Left ventricle myocardium inferior (tissue), 1 donor: ENCODE measurements at regions of chr7 and their contacts with region 1.

Region 1: DNA sequence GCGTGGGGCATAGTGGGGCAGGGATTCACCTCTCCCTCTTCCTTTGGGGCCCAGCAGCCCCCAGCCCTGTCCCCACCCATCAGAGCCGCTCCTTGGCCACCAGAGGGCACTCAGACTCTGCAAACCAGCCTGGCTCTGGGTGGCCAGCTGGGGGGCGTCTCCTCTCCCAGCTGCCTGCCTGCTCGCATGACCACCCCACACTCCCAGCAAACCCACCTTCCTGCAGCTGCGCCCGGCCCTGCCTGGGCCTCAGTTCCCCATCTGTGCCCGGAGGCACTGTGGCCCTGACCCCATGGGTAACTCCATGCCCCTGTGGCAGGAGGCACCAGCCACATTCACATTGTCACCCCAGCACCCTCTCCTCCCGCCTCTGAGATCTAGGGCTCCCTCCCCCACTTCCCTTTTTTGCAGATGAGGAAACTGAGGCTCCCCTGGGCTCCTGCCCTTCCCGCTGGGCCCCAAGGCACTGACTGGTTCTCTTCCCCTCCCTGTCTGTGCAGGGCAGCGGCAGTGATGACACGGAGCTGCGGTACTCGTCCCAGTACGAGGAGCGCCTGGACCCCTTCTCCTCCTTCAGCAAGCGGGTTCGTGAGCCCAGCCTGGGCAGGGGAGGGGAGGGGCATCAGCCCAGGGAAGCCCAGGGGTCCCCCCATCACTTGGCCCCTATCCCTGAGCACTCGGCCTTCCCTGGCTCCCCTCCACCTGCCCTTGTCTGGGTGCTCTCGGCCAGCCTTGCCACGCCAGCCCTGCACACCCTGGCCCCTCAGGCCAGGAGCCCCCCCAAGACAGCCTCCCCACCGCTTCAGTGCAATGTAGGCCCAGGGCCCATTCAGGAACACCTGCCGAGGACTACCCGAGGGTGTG is 6.9 kb upstream of the SH2B2 start:
- DNase-seq: peak; percentile 29
- H3K4me3 ChIP-seq: no peak overlapping the region
- H3K27ac ChIP-seq: no peak overlapping the region
- H3K4me1 ChIP-seq: peaks cover 2% of the 10 kb centered on the region
- H3K27me3 ChIP-seq: no peaks in the 10 kb centered on the region
- CTCF ChIP-seq: peak; percentile 83

Region 2: GRCh38 chr7:101688183-101688831 is 591.5 kb before region 1 on chr7:
- intact Hi-C with region 1: loop called (anchors 10 kb)
- DNase-seq: peak; percentile 81
- H3K4me3 ChIP-seq: peak overlapping the region; percentile 52
- H3K27ac ChIP-seq: no peak overlapping the region
- H3K4me1 ChIP-seq: peaks cover 20% of the 10 kb centered on the region
- H3K27me3 ChIP-seq: no peaks in the 10 kb centered on the region
- CTCF ChIP-seq: peak; percentile 96

Region 3: GRCh38 chr7:102169651-102170392 is 109.9 kb before region 1 on chr7:
- intact Hi-C with region 1: no loop called
- DNase-seq: no peak
- H3K4me3 ChIP-seq: peak overlapping the region; percentile 27
- H3K27ac ChIP-seq: peak overlapping the region; percentile 58
- H3K4me1 ChIP-seq: peaks cover 18% of the 10 kb centered on the region
- H3K27me3 ChIP-seq: no peaks in the 10 kb centered on the region
- CTCF ChIP-seq: no peak

Region 4: DNA sequence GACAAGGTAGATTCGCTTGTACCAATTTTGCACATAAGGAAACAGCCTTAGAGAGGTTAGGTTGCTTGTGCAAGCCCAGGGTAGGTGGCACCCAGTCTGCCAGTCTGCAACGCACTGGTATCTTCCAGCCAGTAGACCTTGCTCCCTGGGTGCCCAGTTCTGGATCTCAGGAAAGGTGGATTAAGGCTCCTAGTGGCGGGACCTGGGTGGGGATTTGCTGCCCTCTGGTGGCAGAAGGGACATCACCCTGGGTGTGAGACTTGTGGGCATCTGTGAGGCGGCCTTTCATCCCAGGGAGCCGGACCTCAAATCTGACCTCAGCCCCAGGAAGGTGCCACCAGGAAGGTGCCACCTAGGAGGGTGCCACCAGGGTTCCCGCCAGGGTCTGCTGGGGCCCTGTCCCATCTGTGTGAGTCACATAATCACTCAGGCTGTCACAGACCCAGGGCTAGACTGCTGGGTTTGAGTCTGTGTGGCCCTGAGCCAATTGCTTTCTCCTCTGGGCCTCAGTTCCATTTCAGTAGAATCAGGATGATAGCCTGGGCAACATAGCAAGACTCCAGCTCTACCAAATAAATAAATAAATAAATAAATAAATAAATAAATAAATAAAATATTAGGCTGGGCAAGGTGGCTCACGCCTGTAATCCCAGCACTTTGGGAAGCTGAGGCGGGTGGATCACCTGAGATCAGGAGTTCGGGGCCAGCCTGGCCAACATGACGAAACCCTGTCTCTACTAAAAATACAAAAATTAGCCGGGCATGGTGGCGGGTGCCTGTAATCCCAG is 111.1 kb after region 1 on chr7:
- intact Hi-C with region 1: loop called (anchors 5 kb)
- DNase-seq: peak; percentile 77
- H3K4me3 ChIP-seq: no peak overlapping the region
- H3K27ac ChIP-seq: no peak overlapping the region
- H3K4me1 ChIP-seq: peaks cover 11% of the 10 kb centered on the region
- H3K27me3 ChIP-seq: no peaks in the 10 kb centered on the region
- CTCF ChIP-seq: peak; percentile 95

Region 5: GRCh38 chr7:102412548-102412947 is 132.8 kb after region 1 on chr7:
- intact Hi-C with region 1: no loop called
- DNase-seq: peak; percentile 46
- H3K4me3 ChIP-seq: no peak overlapping the region
- H3K27ac ChIP-seq: no peak overlapping the region
- H3K4me1 ChIP-seq: peaks cover 12% of the 10 kb centered on the region
- H3K27me3 ChIP-seq: no peaks in the 10 kb centered on the region
- CTCF ChIP-seq: peak; percentile 66